Activated CD4-positive, alpha-beta memory T cell treated with anti-CD3 and anti-CD28 coated beads, Interleukin-2, amount 10 ng/mL, durations not matched to agents 7 days and 5 days (primary cell): ENCODE measurements at regions of chr12 and their contacts with region 1.

Region 1: GRCh38 chr12:53500776-53501614 is at the start of gene TARBP2:
- DNase-seq: peak; percentile 96
- H3K4me3 Mint-ChIP-seq: peak within 1 kb of the TSS; percentile 80
- H3K27ac Mint-ChIP-seq: peak within 1 kb of the TSS; percentile 97
- H3K4me1 Mint-ChIP-seq: peaks cover 47% of the 10 kb centered on the region
- H3K27me3 Mint-ChIP-seq: no peaks in the 10 kb centered on the region
- total RNA-seq, gene TARBP2: 24.5 to 28.0 TPM

Region 2: DNA sequence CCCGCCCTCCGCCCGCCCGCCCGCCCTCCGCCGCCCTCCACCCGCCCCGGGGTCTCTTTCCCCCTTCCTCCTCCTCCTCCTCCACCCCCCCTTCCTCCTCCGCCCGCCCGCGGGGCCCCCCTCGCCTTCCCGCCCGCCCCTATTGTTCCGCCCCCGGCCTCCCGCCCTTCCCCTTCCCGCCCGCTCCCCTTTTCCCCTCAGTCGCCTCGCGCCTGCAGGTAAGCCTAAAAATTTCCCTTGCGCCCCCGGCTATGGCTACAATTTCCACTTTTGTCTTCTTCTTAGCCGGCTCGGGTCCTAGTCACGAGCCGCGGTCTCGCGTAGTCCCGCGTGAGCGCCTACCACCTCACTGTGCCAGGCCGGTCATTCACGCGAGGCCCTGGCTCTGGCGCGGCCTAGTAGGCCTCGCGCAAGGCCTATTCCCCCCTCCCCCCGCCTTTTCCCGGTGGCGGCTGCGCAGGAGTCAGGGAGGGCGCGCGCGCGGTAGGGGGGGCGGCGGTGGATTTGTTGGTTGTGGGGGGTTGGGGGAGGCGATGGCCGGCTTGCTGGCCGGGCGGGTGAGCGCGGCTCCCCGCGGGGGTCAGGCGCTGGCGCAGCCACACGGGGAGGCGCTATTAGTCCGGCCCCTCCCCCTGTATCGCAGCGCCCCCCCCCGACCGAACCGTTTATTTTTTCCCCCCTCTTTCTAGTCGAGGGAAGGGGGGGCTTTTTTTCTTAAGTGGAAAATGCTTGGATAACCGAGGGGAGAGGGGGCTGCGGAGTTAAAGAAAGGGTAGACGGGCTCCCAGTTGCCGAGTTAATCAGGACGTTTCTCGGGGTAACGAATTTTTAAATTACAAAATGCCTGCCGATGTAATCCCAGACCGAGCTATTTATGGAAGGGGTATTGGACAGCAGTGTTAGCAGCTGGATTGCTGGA is 48.6 kb before region 1 on chr12:
- CTCF ChIA-PET with region 1: interaction called, 6 read pairs
- POLR2A ChIA-PET with region 1: interaction called, 25 read pairs
- DNase-seq: peak; percentile 76
- H3K4me3 Mint-ChIP-seq: peak overlapping the region; percentile 100
- H3K27ac Mint-ChIP-seq: peak overlapping the region; percentile 99
- H3K4me1 Mint-ChIP-seq: peaks cover 44% of the 10 kb centered on the region
- H3K27me3 Mint-ChIP-seq: no peaks in the 10 kb centered on the region

Region 3: DNA sequence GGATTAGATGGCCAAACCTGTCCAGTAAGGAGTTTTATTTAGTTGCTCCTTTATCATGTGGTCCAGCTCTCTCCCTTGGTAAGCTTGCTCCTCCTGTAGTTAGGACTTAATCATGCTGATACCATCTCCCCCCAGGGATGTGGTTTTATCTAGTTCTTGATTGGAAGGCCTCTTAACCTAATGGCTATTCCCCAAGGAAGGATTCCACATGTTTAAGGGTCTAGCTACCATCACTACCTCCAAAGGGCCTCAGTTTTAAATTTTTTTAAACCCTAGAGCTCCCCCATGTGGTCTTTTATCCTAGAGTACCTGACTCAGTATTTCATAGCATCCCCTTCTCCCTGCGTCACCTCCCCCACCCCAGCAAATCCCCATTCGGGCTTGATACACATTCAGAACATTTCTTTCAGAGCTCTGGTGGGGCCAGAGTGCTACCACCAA is 24.2 kb before region 1 on chr12:
- CTCF ChIA-PET with region 1: interaction called, 6 read pairs
- POLR2A ChIA-PET with region 1: interaction called, 37 read pairs
- DNase-seq: no peak
- H3K4me3 Mint-ChIP-seq: no peak overlapping the region
- H3K27ac Mint-ChIP-seq: peak overlapping the region; percentile 6
- H3K4me1 Mint-ChIP-seq: peaks cover 64% of the 10 kb centered on the region
- H3K27me3 Mint-ChIP-seq: no peaks in the 10 kb centered on the region

Region 4: DNA sequence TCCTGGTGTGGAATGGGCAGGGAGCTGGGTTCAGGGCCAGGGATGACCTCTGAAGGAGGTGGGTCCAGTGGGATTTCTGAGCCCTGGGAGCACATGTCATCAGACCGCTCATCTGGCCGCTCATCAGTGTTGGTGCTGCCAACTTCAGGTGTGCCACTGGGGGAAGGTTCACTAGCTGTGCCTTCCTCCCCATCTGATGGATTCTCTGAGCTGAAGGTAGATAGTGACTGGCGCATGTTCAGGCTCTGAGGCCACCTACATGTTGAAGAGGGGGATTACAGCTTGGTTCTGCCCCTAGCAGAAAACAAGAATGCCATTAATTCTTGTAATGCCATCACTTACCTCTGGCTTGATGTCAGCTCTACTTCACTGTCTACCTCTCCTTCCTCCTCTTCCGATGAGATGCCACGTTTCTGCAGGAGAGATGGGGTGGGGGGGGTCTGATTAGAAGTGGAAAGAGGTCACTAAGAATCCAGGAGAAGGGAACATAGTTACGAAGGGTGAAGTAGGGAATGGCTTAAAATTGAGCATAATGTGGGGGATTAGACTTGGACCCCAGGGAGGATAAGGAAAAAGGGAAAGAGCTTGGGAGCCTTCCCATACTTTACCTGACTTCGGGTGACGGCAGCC is 18.9 kb before region 1 on chr12:
- CTCF ChIA-PET with region 1: interaction called, 6 read pairs
- POLR2A ChIA-PET with region 1: interaction called, 37 read pairs
- DNase-seq: no peak
- H3K4me3 Mint-ChIP-seq: no peak overlapping the region
- H3K27ac Mint-ChIP-seq: no peak overlapping the region
- H3K4me1 Mint-ChIP-seq: peaks cover 19% of the 10 kb centered on the region
- H3K27me3 Mint-ChIP-seq: no peaks in the 10 kb centered on the region

Region 5: GRCh38 chr12:53952871-53953734 is 452.1 kb after region 1 on chr12:
- CTCF ChIA-PET with region 1: no interaction called
- POLR2A ChIA-PET with region 1: no interaction called
- DNase-seq: no peak
- H3K4me3 Mint-ChIP-seq: peak overlapping the region; percentile 33
- H3K27ac Mint-ChIP-seq: peak overlapping the region; percentile 18
- H3K4me1 Mint-ChIP-seq: peaks cover 11% of the 10 kb centered on the region
- H3K27me3 Mint-ChIP-seq: peaks cover 95% of the 10 kb centered on the region